ENCODE measurements at regions of chr20 and their contacts with region 1.

Region 1: DNA sequence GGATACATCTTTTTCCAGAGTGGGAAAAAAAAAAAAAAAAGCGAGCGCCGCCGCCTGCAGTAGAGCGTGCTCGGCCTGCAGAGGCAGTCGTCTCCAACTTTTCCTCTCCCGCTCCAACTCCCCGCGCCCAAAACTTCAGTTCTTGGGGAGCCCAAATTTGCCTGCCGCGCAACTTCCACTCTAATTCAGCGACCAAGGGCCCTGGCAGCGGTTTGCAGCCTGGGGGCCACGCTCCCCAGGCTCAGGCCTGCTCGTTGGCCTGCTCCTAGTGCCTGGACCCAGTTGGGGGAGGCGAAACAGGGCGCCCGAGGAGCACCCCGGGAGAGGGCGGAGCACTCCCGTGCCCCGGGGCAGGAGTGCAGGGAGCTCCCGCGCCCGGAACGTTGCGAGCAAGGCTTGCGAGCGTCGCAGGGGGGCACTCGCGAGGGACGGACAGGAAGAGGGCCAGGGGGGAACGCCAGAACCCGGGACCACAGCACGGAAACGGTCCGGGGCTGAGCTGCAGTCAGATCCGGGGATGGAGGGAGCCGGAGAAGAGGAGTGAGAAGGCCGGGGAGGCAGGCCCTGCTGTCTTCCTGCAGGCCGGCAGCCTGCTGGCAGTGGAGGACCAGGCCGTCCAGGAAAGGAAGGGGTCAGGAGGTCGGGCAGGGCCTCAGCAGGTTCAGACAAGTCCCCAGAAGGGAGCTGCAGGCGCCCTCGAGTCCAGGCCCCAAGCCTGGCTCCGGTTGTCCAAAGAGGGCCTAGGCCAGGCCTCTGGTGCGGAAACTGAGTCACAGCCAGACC is at the start of gene STX16:
- DNase-seq: peak; percentile 79
- H3K4me3 Mint-ChIP-seq: peak within 1 kb of the TSS; percentile 98
- H3K27ac Mint-ChIP-seq: peak within 1 kb of the TSS; percentile 98
- H3K4me1 Mint-ChIP-seq: peaks cover 17% of the 10 kb centered on the region
- H3K27me3 Mint-ChIP-seq: no peaks in the 10 kb centered on the region
- total RNA-seq, gene STX16: 101 and 103 TPM in 2 replicates

Region 2: DNA sequence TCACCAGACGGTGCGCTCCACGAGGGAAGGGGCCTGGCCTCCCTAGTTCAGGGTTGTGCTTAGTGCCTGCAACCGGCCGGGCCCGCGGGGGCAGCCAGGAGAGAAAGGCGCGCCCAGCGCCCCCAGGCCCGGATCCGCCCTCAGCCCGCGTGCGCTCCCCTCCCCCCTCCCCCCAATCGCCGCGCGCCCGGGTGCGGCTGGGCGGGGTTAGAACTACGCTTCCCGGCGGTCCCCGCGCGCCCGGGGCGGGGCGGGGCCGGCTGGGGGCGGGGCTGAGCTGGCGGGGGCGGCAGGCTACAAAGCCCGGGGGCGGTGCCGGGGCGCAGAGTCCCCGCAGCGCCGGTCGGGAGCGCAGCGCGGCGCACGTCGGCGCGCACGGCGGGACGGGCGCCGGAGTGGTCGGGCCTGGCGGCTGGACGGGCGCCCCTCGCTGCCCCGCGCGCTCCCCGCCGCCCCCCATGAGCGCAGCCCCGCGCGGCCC is 1259.9 kb before region 1 on chr20 and contains the start of gene RBM38:
- intact Hi-C with region 1: loop called (anchors 10 kb)
- DNase-seq: peak; percentile 74
- H3K4me3 Mint-ChIP-seq: peak within 1 kb of the TSS; percentile 91
- H3K27ac Mint-ChIP-seq: peak within 1 kb of the TSS; percentile 98
- H3K4me1 Mint-ChIP-seq: peaks cover 30% of the 10 kb centered on the region
- H3K27me3 Mint-ChIP-seq: no peaks in the 10 kb centered on the region
- total RNA-seq, gene RBM38: 88.9 and 89.5 TPM in 2 replicates

Region 3: DNA sequence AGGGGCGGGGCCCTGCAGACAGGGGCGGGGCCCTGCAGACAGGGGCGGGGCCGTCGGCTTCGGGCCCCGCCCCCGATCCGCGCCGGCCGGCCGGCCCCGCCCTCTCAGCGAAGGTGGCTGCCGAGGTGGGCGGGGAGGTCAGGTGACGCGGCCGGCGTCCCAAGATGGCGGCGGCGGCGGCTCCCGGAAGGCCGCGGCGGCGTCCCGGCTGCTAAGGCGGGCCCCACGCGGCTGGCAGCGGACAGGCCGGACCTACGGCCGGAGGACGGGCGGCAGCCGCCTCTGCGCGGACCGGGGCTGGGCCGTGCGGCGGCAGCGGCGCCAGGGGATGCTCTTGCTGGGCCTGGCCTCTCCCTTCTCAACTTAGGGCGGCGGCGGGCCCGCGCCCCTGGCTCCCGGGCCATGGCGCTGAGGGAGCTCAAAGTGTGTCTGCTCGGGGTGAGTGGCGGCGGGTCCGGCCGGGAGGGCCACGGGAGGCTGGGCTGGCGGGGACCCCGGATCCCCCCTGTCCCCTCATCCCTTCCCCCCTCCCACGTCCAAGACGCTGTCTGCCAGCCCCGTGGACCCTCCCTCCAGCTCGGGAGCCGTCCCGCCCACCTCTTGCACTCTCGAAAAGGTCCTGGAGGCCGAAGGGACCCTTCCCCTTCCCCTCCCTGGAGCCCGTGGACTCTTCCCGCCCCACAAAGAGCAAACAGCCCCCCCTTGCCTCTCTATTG is 341.2 kb before region 1 on chr20 and contains the start of gene RAB22A:
- intact Hi-C with region 1: loop called (anchors 1 kb)
- DNase-seq: peak; percentile 76
- H3K4me3 Mint-ChIP-seq: peak within 1 kb of the TSS; percentile 92
- H3K27ac Mint-ChIP-seq: peak within 1 kb of the TSS; percentile 86
- H3K4me1 Mint-ChIP-seq: peaks cover 54% of the 10 kb centered on the region
- H3K27me3 Mint-ChIP-seq: no peaks in the 10 kb centered on the region
- total RNA-seq, gene RAB22A: 16.0 and 16.3 TPM in 2 replicates

Region 4: DNA sequence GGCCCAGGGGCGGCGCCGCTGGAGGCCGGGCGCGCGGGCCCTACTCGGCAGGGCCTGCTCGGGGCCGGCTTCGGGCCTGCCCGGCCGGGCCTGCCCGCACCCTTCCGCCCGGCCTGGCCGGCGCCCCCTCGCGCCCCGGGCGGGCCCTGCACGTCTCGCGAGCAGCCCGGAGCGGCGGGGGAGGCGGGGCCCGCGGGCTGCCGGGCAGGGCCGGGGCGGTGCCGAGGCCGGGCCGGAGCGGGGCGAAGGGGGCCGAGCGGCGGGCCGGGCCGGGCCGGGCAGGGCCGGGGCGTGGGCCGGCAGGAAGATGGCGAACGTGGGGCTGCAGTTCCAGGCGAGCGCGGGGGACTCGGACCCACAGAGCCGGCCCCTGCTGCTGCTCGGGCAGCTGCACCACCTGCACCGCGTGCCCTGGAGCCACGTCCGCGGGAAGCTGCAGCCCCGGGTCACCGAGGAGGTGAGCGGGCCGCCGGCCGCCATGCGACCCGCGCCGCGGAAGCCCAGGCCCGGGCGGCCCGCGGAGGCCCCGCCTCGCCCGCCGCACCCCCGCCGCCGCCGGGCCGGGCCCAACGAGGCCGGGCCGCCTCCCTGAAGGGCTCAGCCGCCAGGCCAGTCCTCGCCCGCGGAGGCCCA is 41.7 kb after region 1 on chr20 and contains the start of gene NPEPL1:
- intact Hi-C with region 1: loop called (anchors 2 kb)
- DNase-seq: peak; percentile 54
- H3K4me3 Mint-ChIP-seq: peak within 1 kb of the TSS; percentile 78
- H3K27ac Mint-ChIP-seq: peak within 1 kb of the TSS; percentile 78
- H3K4me1 Mint-ChIP-seq: peaks cover 15% of the 10 kb centered on the region
- H3K27me3 Mint-ChIP-seq: no peaks in the 10 kb centered on the region
- total RNA-seq, gene NPEPL1: 27.5 and 29.4 TPM in 2 replicates

Region 5: DNA sequence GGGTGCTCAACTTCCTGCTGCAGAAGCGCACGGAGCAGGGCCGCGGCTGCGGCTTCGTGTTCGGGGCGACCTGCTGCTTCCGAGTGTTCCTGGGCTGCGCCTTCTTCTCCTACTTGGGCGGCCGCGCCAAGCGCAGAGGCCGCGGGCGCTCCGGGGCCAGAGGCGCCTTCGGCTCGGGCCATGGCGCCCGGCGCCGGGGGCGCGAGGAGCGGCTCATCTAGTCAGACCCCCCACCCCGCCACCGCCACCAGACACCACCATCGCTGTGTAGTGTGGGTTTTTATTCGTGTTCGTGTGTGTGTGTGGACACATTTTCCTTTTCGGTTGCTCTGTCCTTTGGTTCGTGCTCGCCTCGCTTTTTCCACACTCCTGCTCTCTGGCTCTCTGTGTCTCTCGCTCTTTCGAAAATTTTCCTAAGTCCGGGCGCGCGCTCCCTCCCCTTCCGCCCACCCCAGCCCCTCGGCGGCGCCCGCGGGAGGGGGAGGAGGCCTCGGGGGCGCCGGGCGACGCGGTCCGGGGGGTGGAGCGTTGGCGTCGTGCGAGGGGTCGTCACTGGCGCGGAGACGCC is 239.6 kb after region 1 on chr20:
- intact Hi-C with region 1: loop called (anchors 1 kb)
- DNase-seq: peak; percentile 55
- H3K4me3 Mint-ChIP-seq: peak overlapping the region; percentile 85
- H3K27ac Mint-ChIP-seq: peak overlapping the region; percentile 94
- H3K4me1 Mint-ChIP-seq: peaks cover 31% of the 10 kb centered on the region
- H3K27me3 Mint-ChIP-seq: no peaks in the 10 kb centered on the region

Region 6: DNA sequence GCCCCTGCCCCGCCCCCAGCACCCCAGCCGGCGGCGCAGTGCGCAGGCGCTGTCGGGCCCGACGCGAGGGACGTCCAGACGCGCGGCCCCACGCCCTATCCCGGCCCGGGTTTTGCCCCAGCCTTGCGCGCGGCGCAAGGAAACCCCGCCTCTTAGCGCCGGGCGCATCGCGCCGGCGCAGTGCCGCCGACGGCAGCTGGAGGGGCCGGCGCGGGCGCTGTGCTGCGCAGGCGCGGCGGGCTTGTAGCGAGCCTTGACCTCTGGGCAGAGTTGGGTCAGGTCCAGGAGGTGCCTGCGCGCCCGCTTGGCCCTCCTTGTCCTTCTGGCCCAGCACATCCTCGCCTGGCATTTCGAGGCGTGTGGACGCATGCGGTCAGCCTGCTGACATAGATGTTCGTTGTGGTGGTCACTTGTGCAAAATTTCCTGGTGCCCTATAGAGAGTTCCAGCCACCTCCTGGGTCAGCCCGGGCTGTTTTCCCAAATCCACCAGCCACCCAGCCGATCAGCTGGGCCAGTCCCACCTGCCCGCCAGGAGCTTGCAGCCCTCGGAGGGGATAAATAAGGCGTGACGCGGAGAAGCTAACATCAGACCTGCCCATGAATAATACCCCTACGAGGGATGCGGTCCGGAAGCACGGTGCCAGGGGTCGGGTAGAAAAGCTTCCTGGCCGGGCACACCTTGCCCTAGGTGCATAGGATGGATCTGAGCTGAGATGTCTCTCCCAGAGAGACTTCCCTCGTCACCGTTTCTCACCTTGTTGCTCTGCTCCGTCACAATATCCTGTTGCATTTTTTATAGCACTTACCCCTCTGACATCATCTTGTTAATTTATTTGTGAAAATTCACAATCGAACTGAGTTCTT is 392.1 kb after region 1 on chr20:
- intact Hi-C with region 1: loop called (anchors 10 kb)
- DNase-seq: peak; percentile 93
- H3K4me3 Mint-ChIP-seq: peak overlapping the region; percentile 97
- H3K27ac Mint-ChIP-seq: peak overlapping the region; percentile 95
- H3K4me1 Mint-ChIP-seq: peaks cover 53% of the 10 kb centered on the region
- H3K27me3 Mint-ChIP-seq: no peaks in the 10 kb centered on the region

Measured in activated T-helper 2 cell treated with anti-CD3 and anti-CD28 coated beads, Interferon-gamma antibody, Interleukin-2, Interleukin-4, amounts not matched to agents 10 μg/mL and 5 μg/mL and 100 μg/mL, durations not matched to agents 14 hours and 24 hours and 36 hours (primary cell).